OCI-LY7 (cell line): ENCODE measurements at regions of chr5 and their contacts with region 1.

Region 1: GRCh38 chr5:150436141-150436680 is 13.3 kb downstream of the RPS14 start:
- DNase-seq: peak; percentile 94
- H3K4me3 ChIP-seq: no peak overlapping the region
- H3K27ac ChIP-seq: no peak overlapping the region
- H3K4me1 ChIP-seq: peaks cover 11% of the 10 kb centered on the region
- CTCF ChIP-seq: peak; percentile 95

Region 2: DNA sequence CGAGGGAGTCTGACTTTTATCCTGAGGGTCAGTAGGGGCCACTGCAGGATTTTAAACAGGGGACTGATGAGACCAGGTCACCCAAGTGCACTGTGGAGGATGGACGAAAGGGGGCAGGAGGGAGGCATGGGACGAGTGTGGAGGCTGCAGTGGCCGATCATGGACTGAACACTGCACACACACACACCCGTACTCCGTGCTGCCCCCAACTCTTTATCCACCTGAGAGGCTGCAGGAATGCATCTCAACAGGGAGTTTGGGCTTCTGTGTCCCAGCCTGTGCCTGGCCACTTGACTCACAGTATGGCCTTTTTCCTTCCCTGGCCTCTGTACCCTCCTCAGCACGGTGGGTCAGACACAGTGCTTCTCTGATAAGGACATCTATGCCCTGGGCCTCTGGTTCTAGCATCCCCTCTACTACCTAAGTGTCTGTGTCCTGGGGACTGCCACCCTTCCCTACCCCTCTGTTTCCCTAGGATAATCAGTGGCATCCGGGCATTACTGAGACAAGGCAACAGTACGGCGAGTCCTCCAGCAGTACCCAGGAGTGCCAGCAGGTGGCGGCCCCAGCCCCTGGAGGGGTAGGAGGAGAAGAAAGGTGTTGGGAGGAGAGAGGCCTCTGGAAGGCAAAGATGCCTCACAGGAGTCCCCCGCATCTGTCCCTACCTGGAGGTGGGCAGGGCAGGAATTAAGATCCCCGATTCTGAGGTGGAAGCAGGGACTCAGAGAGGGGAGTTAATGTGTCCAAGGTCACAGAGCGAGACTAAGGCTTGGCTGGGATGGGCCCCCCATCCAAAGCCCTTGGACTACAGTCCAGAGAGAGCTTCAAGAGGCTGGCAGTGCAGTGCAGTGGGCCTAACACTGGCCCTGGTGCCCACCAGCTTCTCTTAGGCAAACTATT is 274.7 kb before region 1 on chr5:
- CTCF ChIA-PET with region 1: no interaction called
- POLR2A ChIA-PET with region 1: no interaction called
- intact Hi-C with region 1: loop called (anchors 1 kb)
- DNase-seq: peak; percentile 69
- H3K4me3 ChIP-seq: no peak overlapping the region
- H3K27ac ChIP-seq: no peak overlapping the region
- H3K4me1 ChIP-seq: peaks cover 13% of the 10 kb centered on the region
- CTCF ChIP-seq: peak; percentile 91

Region 3: DNA sequence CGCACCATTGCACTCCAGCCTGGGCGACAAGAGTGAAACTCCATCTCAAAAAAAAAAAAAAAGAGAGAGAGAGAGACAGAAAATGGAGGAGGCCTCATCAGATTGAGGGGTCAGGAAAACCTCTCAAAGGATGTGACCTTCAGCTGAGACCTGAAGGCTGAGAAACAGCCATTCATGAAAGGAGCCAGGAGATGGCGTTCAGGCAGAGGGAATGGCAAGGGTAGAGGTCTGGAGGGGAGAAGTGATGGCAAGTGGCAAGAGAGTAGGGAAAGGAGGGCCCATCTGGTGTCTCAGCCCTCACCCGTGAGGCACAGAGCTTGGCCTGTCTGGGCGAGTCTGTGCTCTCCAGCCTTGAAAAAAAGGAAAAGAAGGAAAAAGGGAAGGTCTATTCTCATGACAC is 163.7 kb before region 1 on chr5:
- CTCF ChIA-PET with region 1: no interaction called
- POLR2A ChIA-PET with region 1: no interaction called
- intact Hi-C with region 1: loop called (anchors 2 kb)
- DNase-seq: peak; percentile 49
- H3K4me3 ChIP-seq: no peak overlapping the region
- H3K27ac ChIP-seq: no peak overlapping the region
- H3K4me1 ChIP-seq: no peaks in the 10 kb centered on the region
- CTCF ChIP-seq: peak; percentile 56

Region 4: GRCh38 chr5:150398722-150399523 is 37.3 kb before region 1 on chr5:
- CTCF ChIA-PET with region 1: interaction called, 20 read pairs
- POLR2A ChIA-PET with region 1: interaction called, 4 read pairs
- intact Hi-C with region 1: loop called (anchors 1 kb)
- DNase-seq: peak; percentile 89
- H3K4me3 ChIP-seq: no peak overlapping the region
- H3K27ac ChIP-seq: peak overlapping the region; percentile 36
- H3K4me1 ChIP-seq: peaks cover 29% of the 10 kb centered on the region
- CTCF ChIP-seq: peak; percentile 91

Region 5: DNA sequence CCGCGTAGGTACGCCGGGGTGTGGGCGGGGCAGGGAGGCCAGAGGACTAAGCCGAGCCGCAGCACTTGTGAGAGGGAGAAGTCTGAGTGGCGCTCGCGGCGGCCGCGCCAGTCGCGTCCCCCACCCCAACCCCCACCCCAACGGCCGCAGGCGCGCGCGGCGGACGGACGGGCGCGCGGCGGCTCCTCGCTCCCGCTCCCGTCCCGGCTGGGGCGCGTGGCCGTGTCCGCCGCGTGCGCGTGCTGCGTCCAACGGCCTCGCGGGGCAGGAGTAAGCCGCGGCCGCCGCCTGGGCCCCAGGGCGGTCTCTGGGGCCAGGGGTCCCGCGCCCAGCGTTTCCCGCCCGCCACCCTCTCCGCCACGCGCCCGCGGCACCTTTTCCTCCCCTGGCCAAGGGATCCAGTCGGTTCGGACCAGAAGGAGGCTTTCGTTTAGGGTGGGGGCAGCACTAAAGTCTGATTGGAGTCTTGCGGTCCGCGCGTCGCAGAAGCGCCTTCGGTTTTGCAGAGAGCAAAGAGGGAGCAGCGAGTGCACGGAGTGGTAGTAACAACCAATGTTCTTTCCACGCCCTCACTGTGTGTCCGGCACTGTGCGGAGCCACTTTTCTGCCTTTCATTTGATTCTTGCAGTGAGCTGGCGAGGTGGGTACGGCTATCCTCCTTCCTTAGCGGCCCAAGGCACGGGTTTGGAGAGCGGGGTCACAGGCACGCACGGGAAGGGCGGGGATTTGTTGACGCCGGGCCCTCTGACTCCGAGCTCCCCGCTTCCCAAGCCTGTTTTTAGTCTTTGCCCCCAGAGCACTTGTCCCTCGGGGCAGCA is 1336.0 kb after region 1 on chr5:
- CTCF ChIA-PET with region 1: no interaction called
- POLR2A ChIA-PET with region 1: no interaction called
- intact Hi-C with region 1: no loop called
- DNase-seq: peak; percentile 63
- H3K4me3 ChIP-seq: peak overlapping the region; percentile 91
- H3K27ac ChIP-seq: peak overlapping the region; percentile 87
- H3K4me1 ChIP-seq: peaks cover 43% of the 10 kb centered on the region
- CTCF ChIP-seq: no peak